Activated naive CD4-positive, alpha-beta T cell treated with anti-CD3 and anti-CD28 coated beads, Interleukin-2, amount 10 ng/mL, durations not matched to agents 7 days and 5 days (primary cell): ENCODE measurements at regions of chr6 and their contacts with region 1.

Region 1: DNA sequence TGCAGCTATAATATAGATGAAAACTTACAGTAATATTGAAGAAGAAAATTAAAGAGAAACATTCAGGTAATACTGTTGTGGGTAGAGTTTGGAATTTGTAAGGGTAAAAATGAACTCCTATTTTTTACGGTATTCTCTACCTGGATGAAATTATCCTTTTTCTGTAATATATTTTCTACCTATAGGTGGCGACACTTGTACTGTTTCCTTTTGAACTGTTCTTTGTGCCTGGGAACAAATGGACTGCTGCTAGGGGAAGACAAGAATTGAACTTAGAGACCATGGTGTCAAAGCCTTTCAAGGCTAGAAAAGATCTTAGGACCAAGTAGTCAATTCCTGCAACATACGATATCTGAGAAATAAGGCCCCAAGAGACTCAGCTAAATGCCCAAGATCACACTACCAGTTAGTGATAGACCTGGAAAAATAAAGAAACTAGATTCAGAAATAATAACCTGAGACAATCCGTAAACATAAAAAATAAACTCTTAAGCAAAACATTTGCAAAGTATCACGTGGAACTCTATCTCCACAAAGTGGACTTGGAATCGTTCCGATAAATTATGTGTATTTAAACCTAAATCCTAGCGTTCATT is 383.8 kb downstream of the TFAP2A start:
- DNase-seq: no peak
- H3K4me3 Mint-ChIP-seq: no peak overlapping the region
- H3K27ac Mint-ChIP-seq: no peak overlapping the region
- H3K4me1 Mint-ChIP-seq: no peaks in the 10 kb centered on the region
- H3K27me3 Mint-ChIP-seq: no peaks in the 10 kb centered on the region

Region 2: DNA sequence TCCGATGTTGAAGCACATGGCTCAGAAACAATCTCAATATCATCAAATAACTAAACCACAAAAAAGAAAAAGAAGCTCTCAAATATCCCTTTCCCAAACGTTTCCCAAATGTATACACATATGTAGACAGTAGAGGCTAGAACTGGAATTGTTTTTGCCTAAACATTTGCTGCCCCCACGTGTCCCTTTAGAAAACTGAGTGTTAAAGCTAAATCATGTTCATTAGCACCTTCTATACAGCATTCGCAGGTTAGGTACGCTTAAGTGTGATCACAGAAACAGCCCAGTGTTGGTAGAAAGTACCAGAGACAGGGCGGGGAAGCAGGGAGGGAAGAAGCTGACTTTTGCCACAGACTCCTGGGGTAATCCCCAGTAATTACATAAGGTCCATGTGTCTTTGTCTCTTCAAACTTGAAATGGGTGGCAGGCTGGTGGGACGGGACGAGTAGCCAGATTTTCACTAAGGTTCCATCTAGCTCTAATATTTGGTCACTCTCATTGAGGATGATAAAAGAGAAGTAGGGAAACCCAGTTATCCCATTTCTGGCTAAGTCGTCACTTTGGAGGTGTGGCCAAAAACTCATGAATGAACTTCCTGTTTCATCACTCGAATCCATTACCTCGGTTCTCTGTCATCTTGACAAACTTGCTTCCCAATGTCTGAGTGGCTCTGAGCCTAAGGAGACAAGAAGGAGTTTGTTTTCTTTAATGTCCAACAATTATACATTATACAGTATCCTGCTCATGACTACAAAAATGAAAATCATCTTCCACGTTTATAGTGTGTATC is 398.8 kb after region 1 on chr6:
- CTCF ChIA-PET with region 1: interaction called, 13 read pairs
- DNase-seq: no peak
- H3K4me3 Mint-ChIP-seq: no peak overlapping the region
- H3K27ac Mint-ChIP-seq: no peak overlapping the region
- H3K4me1 Mint-ChIP-seq: peaks cover 33% of the 10 kb centered on the region
- H3K27me3 Mint-ChIP-seq: peaks cover 50% of the 10 kb centered on the region